ENCODE measurements at regions of chr2 and their contacts with region 1.

Region 1: DNA sequence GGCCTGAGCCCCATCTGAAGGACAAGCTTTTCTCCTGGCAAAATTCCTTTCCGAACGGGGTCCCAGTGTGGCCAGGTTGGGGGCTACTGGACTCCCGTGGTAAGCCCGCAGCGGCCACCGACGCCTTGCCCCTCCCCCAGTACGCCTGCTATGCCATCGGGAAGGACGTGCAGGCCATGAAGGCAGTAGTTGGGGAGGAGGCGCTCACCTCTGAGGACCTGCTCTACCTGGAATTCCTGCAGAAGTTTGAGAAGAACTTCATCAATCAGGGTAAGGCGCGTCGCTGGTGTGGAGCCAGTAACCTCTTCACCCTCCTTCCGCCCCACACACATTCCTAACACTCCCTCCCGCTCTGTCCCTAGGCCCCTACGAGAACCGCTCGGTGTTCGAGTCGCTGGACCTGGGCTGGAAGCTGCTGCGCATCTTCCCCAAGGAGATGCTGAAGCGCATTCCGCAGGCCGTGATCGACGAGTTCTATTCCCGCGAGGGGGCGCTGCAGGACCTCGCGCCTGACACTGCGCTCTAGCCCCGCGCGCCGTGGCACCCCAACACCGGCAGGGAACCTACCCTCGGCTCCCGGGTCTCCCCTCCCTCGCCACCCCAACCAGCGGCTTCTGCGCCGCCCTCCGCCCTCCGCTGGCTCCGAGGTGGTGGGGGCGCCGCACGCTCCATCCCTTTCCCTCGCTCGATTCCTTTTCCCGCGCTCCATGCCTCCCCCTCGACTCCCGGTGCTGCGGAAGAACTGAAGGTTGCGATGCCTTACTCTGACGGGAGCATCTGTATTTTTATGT is 13.6 kb upstream of the ANKRD53 start:
- DNase-seq: peak; percentile 77 to 80
- ATAC-seq: peak; percentile 69 to 94
- H3K4me3 ChIP-seq: peak overlapping the region; percentile 51
- H3K27ac ChIP-seq: peak overlapping the region in 1 of 2 experiments; percentile 71; a peak in 3 of 6 replicates
- H3K4me1 ChIP-seq: no peaks in the 10 kb centered on the region
- CTCF ChIP-seq: peak; percentile 93
- EP300 ChIP-seq: no peak
- POLR2A ChIP-seq: no peak
- RAD21 ChIP-seq: peak; percentile 62 to 69

Region 2: DNA sequence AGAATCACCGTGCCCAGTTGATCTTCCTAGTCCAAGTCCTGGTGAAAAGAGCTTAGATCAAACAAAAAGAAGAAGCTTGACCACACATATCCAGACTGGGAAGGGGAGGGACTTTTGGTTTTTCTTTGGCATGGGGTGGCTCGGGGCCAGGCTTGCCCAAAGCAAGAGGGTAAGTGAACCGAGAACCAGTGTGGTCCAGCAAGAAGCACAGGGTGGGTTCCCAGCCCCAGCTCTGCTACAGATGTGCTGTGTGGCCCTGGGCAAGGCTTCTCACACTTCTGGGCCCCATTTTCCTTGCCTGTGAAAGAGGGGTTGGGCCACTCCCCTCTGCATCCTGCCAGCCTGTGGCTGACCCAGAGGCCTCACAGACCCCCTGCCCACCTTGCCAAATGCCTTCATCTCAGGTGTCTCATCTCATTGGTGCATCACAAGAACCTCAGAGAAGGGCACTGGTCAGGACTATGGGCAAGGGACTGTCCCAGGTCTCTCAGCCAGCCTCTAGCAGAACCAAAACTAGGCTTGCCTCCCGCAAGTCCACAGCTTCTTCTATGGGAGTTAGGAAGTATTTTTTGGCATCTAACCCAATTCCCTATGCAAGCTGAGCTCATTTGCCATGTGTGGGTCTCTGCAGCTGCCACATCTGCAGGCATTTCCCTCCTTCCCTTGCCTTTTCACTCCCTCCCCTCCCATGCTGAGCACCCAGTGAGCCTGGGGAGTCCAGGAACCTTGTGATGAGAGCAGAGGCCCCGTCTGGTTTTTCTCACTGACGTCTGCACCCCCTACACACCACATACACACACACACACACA is 22.2 kb before region 1 on chr2:
- CTCF ChIA-PET with region 1: interaction called, 120 read pairs
- POLR2A ChIA-PET with region 1: no interaction called
- DNase-seq: no peak
- ATAC-seq: no peak
- H3K4me3 ChIP-seq: no peak overlapping the region
- H3K27ac ChIP-seq: no peak overlapping the region
- H3K4me1 ChIP-seq: peaks cover 7% of the 10 kb centered on the region; the same call in 2 of the 3 replicates
- CTCF ChIP-seq: no peak
- EP300 ChIP-seq: no peak
- POLR2A ChIP-seq: no peak
- RAD21 ChIP-seq: no peak

Region 3: GRCh38 chr2:70977605-70978205 is 12.9 kb after region 1 on chr2:
- CTCF ChIA-PET with region 1: interaction called, 171 read pairs
- POLR2A ChIA-PET with region 1: interaction called, 5 read pairs
- DNase-seq: no peak
- ATAC-seq: no peak
- H3K4me3 ChIP-seq: peak overlapping the region; percentile 55; the same call in 1 of the 3 replicates
- H3K27ac ChIP-seq: no peak overlapping the region
- H3K4me1 ChIP-seq: peaks cover 8% of the 10 kb centered on the region; the same call in 1 of the 3 replicates
- CTCF ChIP-seq: no peak; the same call in 1 of the 3 replicates
- EP300 ChIP-seq: no peak
- POLR2A ChIP-seq: no peak
- RAD21 ChIP-seq: no peak

Region 4: DNA sequence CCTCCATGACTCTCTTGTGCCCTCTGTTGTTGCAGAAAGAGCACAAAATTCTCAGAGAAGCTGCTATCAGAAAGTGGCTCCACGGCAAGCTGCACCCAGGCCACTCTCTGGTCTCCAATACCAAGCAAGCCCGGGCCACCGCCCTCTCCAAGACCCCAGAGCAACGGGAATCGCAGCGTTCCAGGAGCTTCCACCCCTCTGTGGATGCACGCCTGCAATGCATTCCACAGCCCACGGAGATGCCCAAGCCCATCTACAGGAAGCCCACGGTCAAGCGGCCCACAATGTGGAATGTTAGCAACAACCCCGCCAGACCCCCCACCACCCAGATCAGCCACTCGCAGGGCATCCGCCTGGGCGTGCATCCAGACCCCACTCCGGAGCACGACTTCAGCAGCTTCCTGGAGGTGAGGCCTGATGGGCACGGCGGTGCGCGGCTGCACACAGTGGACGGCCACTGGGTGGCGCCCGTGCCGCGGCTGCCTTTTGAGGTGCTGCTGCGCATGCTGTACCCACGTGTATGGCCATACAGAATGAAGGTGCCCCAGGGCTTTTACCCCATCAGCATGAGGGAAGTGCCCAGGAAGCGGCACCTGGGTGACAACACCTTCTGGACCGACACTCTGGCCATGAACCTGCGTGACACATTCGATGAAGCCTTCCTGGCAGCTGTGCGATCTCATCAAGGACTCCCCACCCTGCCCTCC is 19.9 kb after region 1 on chr2:
- CTCF ChIA-PET with region 1: interaction called, 171 read pairs
- POLR2A ChIA-PET with region 1: no interaction called
- DNase-seq: peak; percentile 67 to 79
- ATAC-seq: peak; percentile 87 to 98
- H3K4me3 ChIP-seq: no peak overlapping the region
- H3K27ac ChIP-seq: no peak overlapping the region
- H3K4me1 ChIP-seq: no peaks in the 10 kb centered on the region
- CTCF ChIP-seq: peak; percentile 67
- EP300 ChIP-seq: no peak
- POLR2A ChIP-seq: no peak
- RAD21 ChIP-seq: peak in 1 of 2 experiments; percentile 20; a peak in 1 of 5 replicates

Region 5: GRCh38 chr2:71000780-71001591 is 36.2 kb after region 1 on chr2:
- CTCF ChIA-PET with region 1: interaction called, 30 read pairs
- POLR2A ChIA-PET with region 1: no interaction called
- DNase-seq: peak; percentile 59 to 80
- ATAC-seq: peak; percentile 86 to 93
- H3K4me3 ChIP-seq: peak overlapping the region; percentile 42
- H3K27ac ChIP-seq: peak overlapping the region; percentile 64 to 83
- H3K4me1 ChIP-seq: peaks cover 5% of the 10 kb centered on the region; the same call in 1 of the 3 replicates
- CTCF ChIP-seq: peak; percentile 94
- EP300 ChIP-seq: no peak
- POLR2A ChIP-seq: peak; percentile 25; the same call in 1 of the 2 replicates
- RAD21 ChIP-seq: peak; percentile 41 to 43; a peak in 4 of 5 replicates

Region 6: DNA sequence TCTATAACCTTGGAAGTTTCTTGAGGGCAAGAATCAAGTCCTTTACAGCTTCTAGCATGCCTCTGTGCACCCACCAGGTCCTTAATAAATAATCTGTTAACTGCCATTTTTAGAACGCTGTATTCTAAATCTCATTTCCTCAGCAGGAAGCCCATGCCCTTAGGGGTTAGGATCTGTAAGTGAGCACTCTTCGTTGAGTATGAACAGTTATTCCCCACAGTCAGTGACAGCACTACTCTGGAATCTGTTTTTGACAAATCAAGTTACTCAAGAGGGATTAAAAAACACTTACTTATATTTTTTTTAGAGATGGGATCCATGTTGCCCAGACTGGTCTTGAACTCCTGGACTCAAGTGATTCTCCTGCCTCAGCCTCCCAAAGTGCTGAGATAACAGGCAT is 247.5 kb after region 1 on chr2:
- CTCF ChIA-PET with region 1: no interaction called
- POLR2A ChIA-PET with region 1: no interaction called
- DNase-seq: no peak
- ATAC-seq: no peak
- H3K4me3 ChIP-seq: no peak overlapping the region
- H3K27ac ChIP-seq: no peak overlapping the region
- H3K4me1 ChIP-seq: no peaks in the 10 kb centered on the region
- CTCF ChIP-seq: no peak
- EP300 ChIP-seq: no peak
- POLR2A ChIP-seq: no peak
- RAD21 ChIP-seq: no peak

Measured in A549 (cell line).